HepG2 (cell line): ENCODE measurements at regions of chr19 and their contacts with region 1.

Region 1: DNA sequence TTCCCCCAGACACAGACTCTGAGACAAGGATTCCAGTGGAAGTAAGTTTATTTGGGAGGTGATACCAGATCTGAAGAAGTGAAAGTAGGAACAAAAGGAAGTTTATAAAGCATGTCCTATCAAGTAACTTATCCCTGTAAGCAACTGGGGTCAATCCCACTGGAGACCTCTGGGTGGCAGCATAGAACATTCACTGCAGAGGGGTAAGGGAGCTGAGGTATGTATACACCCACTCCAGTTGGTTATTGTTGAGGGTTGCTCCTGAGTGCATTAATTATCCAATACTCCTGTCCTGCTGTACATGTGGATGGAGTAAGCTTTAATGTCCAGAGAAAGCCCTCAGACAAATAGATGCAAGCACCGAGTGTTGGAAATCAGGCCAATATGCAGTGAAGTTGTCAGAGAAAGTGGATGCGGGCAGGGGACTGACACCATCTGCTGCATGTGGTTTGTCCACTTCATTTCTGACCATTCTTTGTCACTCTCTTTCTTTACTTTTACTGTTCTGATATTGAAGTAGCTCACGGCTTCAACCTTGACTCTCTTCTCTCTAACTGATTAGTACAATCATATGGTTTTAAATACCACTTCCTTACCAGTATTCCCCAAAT is 46.7 kb downstream of the NOTCH3 start:
- DNase-seq: peak; percentile 49
- ATAC-seq: 0 out of 3 replicates have a peak, but pooled peaks have one; percentile 49
- H3K4me3 ChIP-seq: no peak overlapping the region
- H3K27ac ChIP-seq: no peak overlapping the region
- H3K4me1 ChIP-seq: no peaks in the 10 kb centered on the region
- H3K27me3 ChIP-seq: peaks cover 2 to 4% of the 10 kb centered on the region in 2 experiments; a peak in 2 of 5 replicates
- CTCF ChIP-seq: peak; percentile 45; the same call in 1 of the 2 replicates
- EP300 ChIP-seq: no peak
- POLR2A ChIP-seq: no peak
- RAD21 ChIP-seq: no peak

Region 2: GRCh38 chr19:15091901-15092753 is 62.0 kb before region 1 on chr19:
- CTCF ChIA-PET with region 1: interaction called, 30 read pairs
- POLR2A ChIA-PET with region 1: no interaction called
- in situ Hi-C with region 1: loop called (anchors 5 kb)
- intact Hi-C with region 1: loop called (anchors 1 kb)
- DNase-seq: peak; percentile 66
- ATAC-seq: peak; percentile 77
- H3K4me3 ChIP-seq: peak overlapping the region in 2 of 3 experiments; percentile 7 to 37; a peak in 3 of 6 replicates
- H3K27ac ChIP-seq: no peak overlapping the region
- H3K4me1 ChIP-seq: peaks cover 21% of the 10 kb centered on the region
- H3K27me3 ChIP-seq: peaks cover 0 to 9% of the 10 kb centered on the region in 2 experiments; a peak in 2 of 5 replicates
- CTCF ChIP-seq: peak; percentile 63
- EP300 ChIP-seq: no peak
- POLR2A ChIP-seq: no peak
- RAD21 ChIP-seq: no peak

Region 3: GRCh38 chr19:15101479-15102082 is 52.5 kb before region 1 on chr19:
- CTCF ChIA-PET with region 1: interaction called, 12 read pairs
- POLR2A ChIA-PET with region 1: no interaction called
- in situ Hi-C with region 1: loop called (anchors 5 kb)
- intact Hi-C with region 1: no loop called
- DNase-seq: peak; percentile 52
- ATAC-seq: peak; percentile 72
- H3K4me3 ChIP-seq: no peak overlapping the region
- H3K27ac ChIP-seq: no peak overlapping the region
- H3K4me1 ChIP-seq: peaks cover 18% of the 10 kb centered on the region
- H3K27me3 ChIP-seq: no peaks in the 10 kb centered on the region
- CTCF ChIP-seq: peak; percentile 77
- EP300 ChIP-seq: no peak
- POLR2A ChIP-seq: no peak
- RAD21 ChIP-seq: no peak

Region 4: GRCh38 chr19:15138427-15138826 is 15.7 kb before region 1 on chr19:
- CTCF ChIA-PET with region 1: no interaction called
- POLR2A ChIA-PET with region 1: no interaction called
- in situ Hi-C with region 1: no loop called
- intact Hi-C with region 1: no loop called
- DNase-seq: no peak
- ATAC-seq: no peak
- H3K4me3 ChIP-seq: no peak overlapping the region
- H3K27ac ChIP-seq: no peak overlapping the region
- H3K4me1 ChIP-seq: no peaks in the 10 kb centered on the region
- H3K27me3 ChIP-seq: no peaks in the 10 kb centered on the region
- CTCF ChIP-seq: no peak
- EP300 ChIP-seq: no peak
- POLR2A ChIP-seq: no peak
- RAD21 ChIP-seq: no peak